ENCODE measurements at regions of chr11 and their contacts with region 1.

Region 1: GRCh38 chr11:76860539-76861475 is at the start of gene ACER3:
- DNase-seq: peak; percentile 77 to 95
- H3K4me3 ChIP-seq: peak within 1 kb of the TSS; percentile 69 to 96
- H3K27ac ChIP-seq: peak within 1 kb of the TSS; percentile 87 to 88
- H3K4me1 ChIP-seq: peaks cover 0 to 12% of the 10 kb centered on the region in 2 donors
- H3K27me3 ChIP-seq: no peaks in the 10 kb centered on the region
- CTCF ChIP-seq: peak in 2 of 3 experiments; percentile 15 to 31
- total RNA-seq, gene ACER3: 10.5 TPM

Region 2: GRCh38 chr11:76444384-76445123 is 416.3 kb before region 1 on chr11 and contains the start of gene EMSY:
- intact Hi-C with region 1: loop called (anchors 2 kb)
- DNase-seq: peak; percentile 89 to 99
- H3K4me3 ChIP-seq: peak within 1 kb of the TSS; percentile 87 to 90
- H3K27ac ChIP-seq: peak within 1 kb of the TSS; percentile 90 to 93
- H3K4me1 ChIP-seq: peaks cover 8 to 15% of the 10 kb centered on the region in 2 donors
- H3K27me3 ChIP-seq: no peaks in the 10 kb centered on the region
- CTCF ChIP-seq: no peak
- total RNA-seq, gene EMSY: 7.5 TPM

Region 3: GRCh38 chr11:76807206-76807875 is 53.5 kb before region 1 on chr11:
- intact Hi-C with region 1: loop called (anchors 2 kb)
- DNase-seq: peak in 1 of 2 donors; percentile 92
- H3K4me3 ChIP-seq: peak overlapping the region in 1 of 2 donors; percentile 41
- H3K27ac ChIP-seq: peak overlapping the region; percentile 54 to 58
- H3K4me1 ChIP-seq: peaks cover 0 to 10% of the 10 kb centered on the region in 2 donors
- H3K27me3 ChIP-seq: no peaks in the 10 kb centered on the region
- CTCF ChIP-seq: peak; percentile 77 to 80 (median 79)

Region 4: GRCh38 chr11:76919887-76920746 is 59.3 kb after region 1 on chr11:
- intact Hi-C with region 1: loop called (anchors 5 kb)
- DNase-seq: peak; percentile 27 to 88
- H3K4me3 ChIP-seq: no peak overlapping the region
- H3K27ac ChIP-seq: no peak overlapping the region
- H3K4me1 ChIP-seq: no peaks in the 10 kb centered on the region
- H3K27me3 ChIP-seq: no peaks in the 10 kb centered on the region
- CTCF ChIP-seq: peak; percentile 63 to 93 (median 83)

Region 5: DNA sequence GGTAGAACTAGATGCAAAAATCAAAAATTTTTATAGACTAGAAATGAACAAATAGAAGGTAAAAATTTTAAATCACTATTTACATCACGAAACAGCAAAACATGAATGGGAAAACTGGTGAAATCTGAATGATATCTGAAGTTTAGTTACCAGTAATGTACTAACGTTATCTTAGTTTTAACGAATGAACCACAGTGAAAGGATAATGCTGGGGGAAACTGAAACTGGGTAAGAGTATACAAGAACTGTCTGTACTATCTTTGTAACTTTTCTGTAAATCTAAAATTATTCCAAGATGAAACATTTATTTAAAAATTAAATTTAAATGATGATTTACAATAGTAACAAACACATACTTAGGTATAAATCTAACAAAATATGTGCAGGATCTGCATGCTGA is 433.2 kb after region 1 on chr11:
- intact Hi-C with region 1: no loop called
- DNase-seq: no peak
- H3K4me3 ChIP-seq: no peak overlapping the region
- H3K27ac ChIP-seq: no peak overlapping the region
- H3K4me1 ChIP-seq: no peaks in the 10 kb centered on the region
- H3K27me3 ChIP-seq: no peaks in the 10 kb centered on the region
- CTCF ChIP-seq: no peak

Measured in ascending aorta (tissue), 2 donors.